K562 (cell line): ENCODE measurements at regions of chr18 and their contacts with region 1.

Region 1: DNA sequence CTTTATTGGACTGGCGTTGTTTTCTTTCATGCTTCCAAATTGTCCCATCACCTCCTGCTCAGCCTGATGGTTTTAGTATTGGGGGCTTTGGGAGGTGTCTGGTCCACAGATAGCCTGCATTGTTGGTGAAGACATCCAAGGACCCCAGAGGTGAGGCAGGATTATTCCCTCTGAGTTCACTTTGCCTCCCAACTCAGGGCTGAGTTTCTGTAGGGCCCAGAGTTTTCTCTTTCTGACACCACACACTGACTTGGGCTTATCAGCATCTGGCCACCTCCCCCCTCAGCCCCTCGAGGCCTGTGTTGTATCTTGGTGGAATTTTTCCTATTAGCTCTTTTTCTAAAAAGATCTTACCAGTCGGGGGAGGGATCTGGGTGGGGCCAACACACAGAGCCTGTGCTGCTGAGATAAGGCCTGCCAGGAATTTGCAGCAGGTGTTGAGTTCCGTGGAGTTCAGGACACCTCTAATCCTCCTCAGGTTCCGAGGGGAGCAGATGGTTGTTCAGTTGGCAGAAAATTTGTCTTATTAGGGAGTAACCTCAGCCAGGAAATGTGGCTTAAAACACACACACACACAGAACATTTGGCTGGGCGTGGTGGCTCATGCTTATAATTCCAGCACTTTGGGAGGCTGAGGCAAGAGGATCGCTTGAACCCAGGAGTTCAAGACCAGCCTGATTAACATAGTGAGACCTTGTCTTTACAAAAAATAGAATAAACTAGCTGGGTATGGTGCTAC is 7.3 kb downstream of the EMILIN2 start:
- DNase-seq: peak; percentile 96 to 98 (median 97)
- ATAC-seq: peak; percentile 89
- H3K4me3 ChIP-seq: no peak overlapping the region
- H3K27ac ChIP-seq: peak overlapping the region; percentile 72
- H3K4me1 ChIP-seq: peaks cover 48 to 64% of the 10 kb centered on the region in 2 experiments
- H3K27me3 ChIP-seq: no peaks in the 10 kb centered on the region
- CTCF ChIP-seq: no peak
- EP300 ChIP-seq: peak; percentile 97
- POLR2A ChIP-seq: no peak
- RAD21 ChIP-seq: peak in 1 of 2 experiments; percentile 18; a peak in 2 of 4 replicates

Region 2: DNA sequence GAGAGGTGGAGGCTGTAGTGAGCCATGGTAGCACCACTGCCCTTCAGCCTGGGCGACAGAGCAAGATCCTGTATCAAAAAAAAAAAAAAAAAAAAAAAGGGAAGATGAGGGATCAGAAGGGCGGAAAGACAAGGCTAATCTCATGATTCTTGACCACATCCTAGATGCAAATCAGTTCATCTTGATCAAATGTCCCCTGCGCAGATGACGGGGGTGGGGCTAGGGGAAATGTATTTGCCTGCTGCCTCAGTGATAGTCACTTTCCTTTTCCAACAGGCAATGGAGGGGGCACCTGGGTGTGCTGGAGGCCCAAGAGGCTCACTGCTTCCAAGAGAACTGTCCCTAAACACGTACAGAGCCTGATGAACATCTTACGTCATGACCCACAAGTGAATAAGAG is 10.9 kb before region 1 on chr18:
- CTCF ChIA-PET with region 1: no interaction called
- POLR2A ChIA-PET with region 1: interaction called, 10 read pairs
- in situ Hi-C with region 1: no loop called
- intact Hi-C with region 1: no loop called
- DNase-seq: peak in 1 of 4 experiments; percentile 6
- ATAC-seq: no peak
- H3K4me3 ChIP-seq: no peak overlapping the region
- H3K27ac ChIP-seq: no peak overlapping the region
- H3K4me1 ChIP-seq: peaks cover 10 to 22% of the 10 kb centered on the region in 2 experiments
- H3K27me3 ChIP-seq: peaks cover 28 to 32% of the 10 kb centered on the region in 2 experiments
- CTCF ChIP-seq: no peak
- EP300 ChIP-seq: no peak
- POLR2A ChIP-seq: no peak
- RAD21 ChIP-seq: no peak

Region 3: GRCh38 chr18:2894131-2894840 is 40.2 kb after region 1 on chr18:
- CTCF ChIA-PET with region 1: no interaction called
- POLR2A ChIA-PET with region 1: interaction called, 3 read pairs
- in situ Hi-C with region 1: no loop called
- intact Hi-C with region 1: loop called (anchors 1 kb)
- DNase-seq: peak; percentile 71 to 85 (median 78)
- ATAC-seq: peak; percentile 74
- H3K4me3 ChIP-seq: no peak overlapping the region
- H3K27ac ChIP-seq: no peak overlapping the region
- H3K4me1 ChIP-seq: peaks cover 26 to 42% of the 10 kb centered on the region in 2 experiments; a peak in 4 of 5 replicates
- H3K27me3 ChIP-seq: peaks cover 9 to 23% of the 10 kb centered on the region in 2 experiments; a peak in 3 of 5 replicates
- CTCF ChIP-seq: no peak
- EP300 ChIP-seq: peak; percentile 97
- POLR2A ChIP-seq: no peak
- RAD21 ChIP-seq: peak in 1 of 2 experiments; percentile 31; a peak in 3 of 4 replicates

Region 4: DNA sequence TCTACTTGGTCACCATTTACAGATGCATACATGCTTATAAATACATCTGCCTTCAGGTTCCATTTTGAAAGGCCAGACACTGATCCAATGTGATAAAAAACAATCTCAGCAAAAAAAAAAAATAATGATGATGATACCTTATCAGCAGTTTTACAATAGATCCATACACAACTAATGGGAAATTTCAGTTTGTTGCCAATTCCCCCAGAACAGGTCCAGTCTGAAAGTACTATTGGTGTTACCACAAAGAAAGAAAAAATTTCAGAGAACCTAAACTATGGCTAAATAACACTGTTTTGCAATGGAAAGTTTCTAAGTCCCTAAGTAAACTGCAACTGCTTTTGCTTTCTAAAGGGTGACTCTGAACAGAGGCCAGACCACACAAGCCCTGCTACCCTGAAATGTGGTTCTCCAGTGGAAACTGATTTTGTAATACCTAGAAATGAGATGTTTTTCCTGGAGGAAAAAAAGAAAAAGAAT is 104.8 kb after region 1 on chr18:
- CTCF ChIA-PET with region 1: no interaction called
- POLR2A ChIA-PET with region 1: no interaction called
- in situ Hi-C with region 1: no loop called
- intact Hi-C with region 1: no loop called
- DNase-seq: no peak
- ATAC-seq: no peak
- H3K4me3 ChIP-seq: no peak overlapping the region
- H3K27ac ChIP-seq: no peak overlapping the region
- H3K4me1 ChIP-seq: no peaks in the 10 kb centered on the region
- H3K27me3 ChIP-seq: no peaks in the 10 kb centered on the region
- CTCF ChIP-seq: no peak
- EP300 ChIP-seq: no peak
- POLR2A ChIP-seq: no peak
- RAD21 ChIP-seq: no peak